GM12878 (cell line): ENCODE measurements at regions of chr3 and their contacts with region 1.

Region 1: DNA sequence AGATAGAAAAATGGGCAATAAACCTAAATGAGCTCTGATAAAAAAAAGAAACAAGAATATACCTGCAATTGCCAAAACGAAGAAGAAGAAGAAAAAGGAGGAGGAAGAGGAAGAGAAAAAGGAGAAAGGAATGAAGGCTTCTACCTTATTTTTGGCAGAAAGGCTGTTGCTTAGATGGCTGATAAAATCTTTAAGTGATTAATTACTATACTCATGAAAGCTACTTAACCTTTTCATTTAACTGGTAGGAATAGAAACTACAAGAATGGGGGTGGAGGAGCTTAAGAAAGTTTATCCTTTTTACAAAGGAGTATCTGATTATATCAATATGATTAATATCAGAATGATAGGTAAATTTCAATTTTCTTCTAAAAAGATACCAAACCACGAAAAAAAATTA is 75.2 kb downstream of the CLASP2 start:
- DNase-seq: no peak
- ATAC-seq: no peak
- H3K4me3 ChIP-seq: no peak overlapping the region
- H3K27ac ChIP-seq: no peak overlapping the region
- H3K4me1 ChIP-seq: no peaks in the 10 kb centered on the region
- H3K27me3 ChIP-seq: no peaks in the 10 kb centered on the region
- CTCF ChIP-seq: no peak
- EP300 ChIP-seq: no peak
- POLR2A ChIP-seq: no peak
- RAD21 ChIP-seq: no peak

Region 2: GRCh38 chr3:33658991-33659848 is 16.4 kb after region 1 on chr3:
- CTCF ChIA-PET with region 1: interaction called, 11 read pairs
- POLR2A ChIA-PET with region 1: no interaction called
- RAD21 ChIA-PET with region 1: interaction called, 8 read pairs
- SMC1A ChIA-PET with region 1: interaction called, 13 read pairs
- in situ Hi-C with region 1: no loop called
- intact Hi-C with region 1: no loop called
- DNase-seq: peak; percentile 23
- ATAC-seq: peak; percentile 97
- H3K4me3 ChIP-seq: peak overlapping the region; percentile 66
- H3K27ac ChIP-seq: peak overlapping the region; percentile 48
- H3K4me1 ChIP-seq: peaks cover 4% of the 10 kb centered on the region; the same call in 1 of the 2 replicates
- H3K27me3 ChIP-seq: no peaks in the 10 kb centered on the region
- CTCF ChIP-seq: no peak
- EP300 ChIP-seq: no peak
- POLR2A ChIP-seq: peak; percentile 49
- RAD21 ChIP-seq: no peak